Cardiac septum (tissue), 1 donor: ENCODE measurements at regions of chr5 and their contacts with region 1.

Region 1: GRCh38 chr5:5504325-5504724 is 81.8 kb downstream of the ICE1 start:
- DNase-seq: no peak

Region 2: DNA sequence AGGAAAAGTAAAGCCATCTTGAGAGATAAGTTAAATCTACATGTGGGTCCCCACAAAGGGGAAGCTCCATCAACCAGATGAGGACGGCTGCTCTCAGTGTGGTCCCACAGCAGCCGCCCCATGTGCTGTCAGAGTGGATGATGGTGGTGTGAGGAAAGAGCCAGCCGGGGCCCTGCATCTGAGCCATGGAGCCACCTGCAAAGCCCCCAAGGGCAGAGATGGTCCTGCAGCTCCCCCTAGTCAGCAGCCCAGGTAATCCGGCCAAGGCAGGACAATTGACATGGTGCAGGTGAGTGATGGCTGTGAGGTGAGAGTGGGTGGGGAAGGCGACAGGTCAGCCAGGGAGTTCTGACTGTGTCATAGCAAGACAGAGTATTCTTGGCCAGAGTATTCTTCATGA is 377.0 kb after region 1 on chr5:
- intact Hi-C with region 1: loop called (anchors 5 kb)
- DNase-seq: no peak

Region 3: DNA sequence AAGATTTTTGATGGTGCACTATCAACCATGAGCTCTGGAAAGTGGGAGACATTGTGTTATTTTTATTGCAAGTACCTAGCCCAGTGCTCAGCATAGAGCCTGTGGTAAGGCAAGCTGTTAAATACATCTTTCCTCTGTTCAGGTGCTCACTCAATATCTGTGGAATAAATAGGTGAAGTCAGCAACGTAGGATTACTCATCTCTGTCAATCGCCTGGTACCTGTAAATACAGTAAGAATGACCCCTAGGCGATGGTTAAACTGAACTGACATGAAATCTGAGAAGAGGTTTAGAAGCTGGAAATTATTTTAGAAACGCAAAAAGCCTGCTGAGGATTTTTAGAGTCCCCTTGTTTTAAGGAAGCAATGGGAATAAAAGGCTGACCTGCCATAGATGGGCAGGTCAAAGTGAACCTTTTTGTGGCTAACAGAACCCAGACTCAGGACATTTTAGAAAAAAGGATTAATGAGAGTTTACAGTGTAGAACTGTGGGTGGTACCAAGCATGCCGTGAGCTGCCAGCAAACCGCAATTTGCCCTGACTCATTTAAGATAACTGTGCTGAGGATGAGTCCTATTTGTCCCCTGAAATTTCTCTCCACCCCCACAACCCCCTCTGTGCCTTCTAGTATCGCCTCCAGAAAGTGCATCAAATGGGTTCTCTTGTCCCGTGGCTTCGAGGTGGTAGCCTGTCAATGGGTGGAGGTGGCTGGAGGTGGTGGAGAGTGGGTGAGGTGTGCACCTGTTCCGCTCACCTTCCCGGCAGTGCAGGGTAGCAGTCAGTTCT is 498.9 kb after region 1 on chr5:
- intact Hi-C with region 1: no loop called
- DNase-seq: no peak